ENCODE measurements at regions of chr18 and their contacts with region 1.

Region 1: GRCh38 chr18:13823707-13824395 is at the start of gene MC5R:
- DNase-seq: peak; percentile 83
- ATAC-seq: peak; percentile 92
- H3K4me3 Mint-ChIP-seq: no peak within 1 kb of the TSS
- H3K27ac Mint-ChIP-seq: no peak within 1 kb of the TSS
- H3K4me1 Mint-ChIP-seq: peaks cover 2% of the 10 kb centered on the region
- H3K27me3 Mint-ChIP-seq: peaks cover 30% of the 10 kb centered on the region
- total RNA-seq, gene MC5R: not detected

Region 2: GRCh38 chr18:13577091-13577697 is 246.7 kb before region 1 on chr18:
- CTCF ChIA-PET with region 1: no interaction called
- POLR2A ChIA-PET with region 1: no interaction called
- intact Hi-C with region 1: no loop called
- DNase-seq: peak; percentile 73
- ATAC-seq: peak; percentile 90
- H3K4me3 Mint-ChIP-seq: peak overlapping the region; percentile 22
- H3K27ac Mint-ChIP-seq: peak overlapping the region; percentile 55
- H3K4me1 Mint-ChIP-seq: peaks cover 47% of the 10 kb centered on the region
- H3K27me3 Mint-ChIP-seq: no peaks in the 10 kb centered on the region

Region 3: GRCh38 chr18:13712400-13713131 is 111.3 kb before region 1 on chr18:
- CTCF ChIA-PET with region 1: no interaction called
- POLR2A ChIA-PET with region 1: no interaction called
- intact Hi-C with region 1: no loop called
- DNase-seq: no peak
- ATAC-seq: no peak
- H3K4me3 Mint-ChIP-seq: no peak overlapping the region
- H3K27ac Mint-ChIP-seq: no peak overlapping the region
- H3K4me1 Mint-ChIP-seq: peaks cover 12% of the 10 kb centered on the region
- H3K27me3 Mint-ChIP-seq: no peaks in the 10 kb centered on the region

Region 4: GRCh38 chr18:13762690-13763439 is 61.0 kb before region 1 on chr18:
- CTCF ChIA-PET with region 1: no interaction called
- POLR2A ChIA-PET with region 1: no interaction called
- intact Hi-C with region 1: no loop called
- DNase-seq: no peak
- ATAC-seq: no peak
- H3K4me3 Mint-ChIP-seq: no peak overlapping the region
- H3K27ac Mint-ChIP-seq: no peak overlapping the region
- H3K4me1 Mint-ChIP-seq: no peaks in the 10 kb centered on the region
- H3K27me3 Mint-ChIP-seq: no peaks in the 10 kb centered on the region

Region 5: GRCh38 chr18:13813271-13813849 is 10.5 kb before region 1 on chr18:
- CTCF ChIA-PET with region 1: interaction called, 31 read pairs
- POLR2A ChIA-PET with region 1: no interaction called
- intact Hi-C with region 1: no loop called
- DNase-seq: peak; percentile 74
- ATAC-seq: peak; percentile 91
- H3K4me3 Mint-ChIP-seq: no peak overlapping the region
- H3K27ac Mint-ChIP-seq: no peak overlapping the region
- H3K4me1 Mint-ChIP-seq: no peaks in the 10 kb centered on the region
- H3K27me3 Mint-ChIP-seq: peaks cover 2% of the 10 kb centered on the region

Region 6: DNA sequence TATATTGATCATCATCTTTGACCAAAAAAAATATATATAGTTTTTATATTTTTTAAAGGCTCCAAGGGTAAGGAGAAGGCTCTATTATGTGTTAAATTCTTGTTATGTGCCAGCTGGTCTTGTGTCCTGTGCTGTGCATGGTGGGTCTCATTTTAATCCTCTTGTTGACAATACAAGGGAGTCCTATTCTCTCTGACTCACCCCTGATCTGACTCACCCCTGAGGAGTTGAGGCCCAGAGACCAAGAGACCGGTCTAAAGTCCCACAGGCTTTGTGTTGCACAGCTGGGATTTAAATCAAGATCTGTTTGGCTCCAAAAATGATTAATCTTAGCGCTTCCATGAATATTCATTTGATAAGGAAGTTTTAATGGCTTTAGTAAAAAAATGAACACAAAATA is 65.8 kb after region 1 on chr18:
- CTCF ChIA-PET with region 1: no interaction called
- POLR2A ChIA-PET with region 1: no interaction called
- intact Hi-C with region 1: loop called in 1 of 2 experiments (anchors 10 kb)
- DNase-seq: no peak
- ATAC-seq: peak; percentile 36
- H3K4me3 Mint-ChIP-seq: no peak overlapping the region
- H3K27ac Mint-ChIP-seq: no peak overlapping the region
- H3K4me1 Mint-ChIP-seq: no peaks in the 10 kb centered on the region
- H3K27me3 Mint-ChIP-seq: peaks cover 31% of the 10 kb centered on the region

Region 7: GRCh38 chr18:14086458-14087231 is 262.8 kb after region 1 on chr18:
- CTCF ChIA-PET with region 1: interaction called, 19 read pairs
- POLR2A ChIA-PET with region 1: no interaction called
- intact Hi-C with region 1: loop called (anchors 1 kb)
- DNase-seq: peak; percentile 34
- ATAC-seq: no peak
- H3K4me3 Mint-ChIP-seq: no peak overlapping the region
- H3K27ac Mint-ChIP-seq: no peak overlapping the region
- H3K4me1 Mint-ChIP-seq: no peaks in the 10 kb centered on the region
- H3K27me3 Mint-ChIP-seq: peaks cover 2% of the 10 kb centered on the region